ENCODE measurements at regions of chr1 and their contacts with region 1.

Region 1: DNA sequence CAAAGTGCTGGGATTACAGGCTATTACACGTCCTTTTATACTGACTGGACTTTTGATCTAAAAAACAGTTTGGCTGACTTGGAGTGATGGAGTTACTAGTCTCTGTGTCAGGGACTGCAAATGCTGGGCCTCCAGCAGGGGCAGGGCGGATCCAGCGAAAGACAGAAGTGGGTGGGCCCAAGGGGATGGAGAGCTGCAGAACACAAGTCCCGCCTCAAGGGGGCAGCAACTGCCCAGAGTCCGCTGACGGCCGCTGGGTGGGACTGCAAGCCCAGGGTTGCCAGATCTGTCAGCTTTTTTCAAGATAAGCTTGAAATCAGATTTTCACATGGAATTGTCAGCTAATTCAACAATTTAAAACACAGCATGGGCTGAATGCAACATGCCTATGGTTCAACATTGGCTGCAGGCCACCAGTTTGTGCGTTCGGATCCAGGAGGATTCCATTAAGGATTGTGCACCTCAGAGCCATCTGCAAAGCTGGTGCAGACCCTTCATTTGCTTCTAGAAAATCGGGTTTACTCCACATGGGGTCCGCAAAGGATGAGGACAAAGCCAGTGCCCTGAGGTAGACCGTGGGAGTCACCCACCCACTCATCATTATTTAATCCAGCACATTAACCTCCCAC is 10.7 kb downstream of the STMN1 start:
- DNase-seq: peak; percentile 93
- ATAC-seq: peak; percentile 100
- H3K4me3 Mint-ChIP-seq: no peak overlapping the region
- H3K27ac Mint-ChIP-seq: no peak overlapping the region
- H3K4me1 Mint-ChIP-seq: peaks cover 17% of the 10 kb centered on the region
- H3K27me3 Mint-ChIP-seq: no peaks in the 10 kb centered on the region
- CTCF ChIP-seq: peak; percentile 97

Region 2: DNA sequence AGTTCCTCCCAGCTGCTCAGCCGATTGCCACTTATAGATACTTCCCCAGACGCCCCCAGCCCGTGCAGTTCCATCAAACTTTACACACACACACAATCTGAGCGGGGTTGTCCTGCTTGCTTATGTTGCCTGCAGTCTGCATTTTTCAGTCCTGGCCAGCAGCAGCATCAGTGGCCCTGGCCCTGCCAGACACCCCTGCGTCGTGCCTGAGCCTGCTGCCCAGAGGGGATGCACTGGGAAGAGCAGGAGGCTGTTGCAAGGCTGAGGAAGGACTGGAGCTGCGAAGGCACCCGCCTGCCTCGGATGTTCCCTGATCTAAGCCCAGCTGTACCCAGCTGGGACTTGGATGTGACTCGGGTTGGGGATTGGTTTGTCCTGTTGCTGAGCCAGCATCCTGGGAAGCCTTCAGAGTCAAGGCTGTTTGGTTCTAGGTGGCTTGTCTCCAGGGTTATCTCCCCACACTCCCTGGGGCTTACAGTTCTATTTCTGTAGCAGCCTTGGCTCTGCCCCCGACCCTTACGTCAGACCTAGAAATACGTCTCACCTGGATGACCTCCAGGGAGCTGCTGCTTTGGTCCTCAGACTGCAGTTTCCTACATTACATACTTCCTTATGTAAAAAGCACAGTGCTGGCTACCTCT is 236.6 kb before region 1 on chr1:
- CTCF ChIA-PET with region 1: no interaction called
- POLR2A ChIA-PET with region 1: no interaction called
- intact Hi-C with region 1: no loop called
- DNase-seq: peak; percentile 1
- ATAC-seq: no peak
- H3K4me3 Mint-ChIP-seq: no peak overlapping the region
- H3K27ac Mint-ChIP-seq: no peak overlapping the region
- H3K4me1 Mint-ChIP-seq: peaks cover 38% of the 10 kb centered on the region
- H3K27me3 Mint-ChIP-seq: no peaks in the 10 kb centered on the region
- CTCF ChIP-seq: no peak

Region 3: GRCh38 chr1:25810341-25811299 is 84.9 kb before region 1 on chr1:
- CTCF ChIA-PET with region 1: no interaction called
- POLR2A ChIA-PET with region 1: no interaction called
- intact Hi-C with region 1: no loop called
- DNase-seq: peak; percentile 89
- ATAC-seq: peak; percentile 95
- H3K4me3 Mint-ChIP-seq: no peak overlapping the region
- H3K27ac Mint-ChIP-seq: no peak overlapping the region
- H3K4me1 Mint-ChIP-seq: no peaks in the 10 kb centered on the region
- H3K27me3 Mint-ChIP-seq: no peaks in the 10 kb centered on the region
- CTCF ChIP-seq: peak; percentile 99

Region 4: GRCh38 chr1:25914074-25914995 is 18.9 kb after region 1 on chr1:
- CTCF ChIA-PET with region 1: interaction called, 67 read pairs
- POLR2A ChIA-PET with region 1: interaction called, 10 read pairs
- intact Hi-C with region 1: no loop called
- DNase-seq: no peak
- ATAC-seq: no peak
- H3K4me3 Mint-ChIP-seq: no peak overlapping the region
- H3K27ac Mint-ChIP-seq: no peak overlapping the region
- H3K4me1 Mint-ChIP-seq: peaks cover 8% of the 10 kb centered on the region
- H3K27me3 Mint-ChIP-seq: no peaks in the 10 kb centered on the region
- CTCF ChIP-seq: no peak

Region 5: GRCh38 chr1:25971066-25971810 is 75.8 kb after region 1 on chr1:
- CTCF ChIA-PET with region 1: interaction called, 10 read pairs
- POLR2A ChIA-PET with region 1: no interaction called
- intact Hi-C with region 1: no loop called
- DNase-seq: peak; percentile 37
- ATAC-seq: peak; percentile 90
- H3K4me3 Mint-ChIP-seq: peak overlapping the region; percentile 23
- H3K27ac Mint-ChIP-seq: peak overlapping the region; percentile 83
- H3K4me1 Mint-ChIP-seq: peaks cover 40% of the 10 kb centered on the region
- H3K27me3 Mint-ChIP-seq: no peaks in the 10 kb centered on the region
- CTCF ChIP-seq: no peak

Region 6: GRCh38 chr1:25997828-25998761 is 102.6 kb after region 1 on chr1 and contains the start of gene PAFAH2:
- CTCF ChIA-PET with region 1: interaction called, 417 read pairs
- POLR2A ChIA-PET with region 1: interaction called, 160 read pairs
- intact Hi-C with region 1: loop called (anchors 1 kb)
- DNase-seq: peak; percentile 98
- ATAC-seq: peak; percentile 97
- H3K4me3 Mint-ChIP-seq: peak within 1 kb of the TSS; percentile 94
- H3K27ac Mint-ChIP-seq: peak within 1 kb of the TSS; percentile 98
- H3K4me1 Mint-ChIP-seq: peaks cover 18% of the 10 kb centered on the region
- H3K27me3 Mint-ChIP-seq: no peaks in the 10 kb centered on the region
- CTCF ChIP-seq: peak; percentile 91
- total RNA-seq, gene PAFAH2: 7.4 to 8.0 TPM

Region 7: GRCh38 chr1:26016388-26017188 is 121.1 kb after region 1 on chr1:
- CTCF ChIA-PET with region 1: interaction called, 13 read pairs
- POLR2A ChIA-PET with region 1: interaction called, 4 read pairs
- intact Hi-C with region 1: no loop called
- DNase-seq: peak; percentile 23
- ATAC-seq: peak; percentile 19
- H3K4me3 Mint-ChIP-seq: no peak overlapping the region
- H3K27ac Mint-ChIP-seq: no peak overlapping the region
- H3K4me1 Mint-ChIP-seq: peaks cover 19% of the 10 kb centered on the region
- H3K27me3 Mint-ChIP-seq: no peaks in the 10 kb centered on the region
- CTCF ChIP-seq: no peak